ENCODE measurements at regions of chr3 and their contacts with region 1.

Region 1: GRCh38 chr3:33883538-33883950 is 85.1 kb downstream of the PDCD6IP start:
- DNase-seq: peak; percentile 40 to 76 (median 66)
- ATAC-seq: peak; percentile 45
- H3K4me3 ChIP-seq: no peak overlapping the region
- H3K27ac ChIP-seq: no peak overlapping the region
- H3K4me1 ChIP-seq: peaks cover 0 to 22% of the 10 kb centered on the region in 2 experiments; a peak in 2 of 5 replicates
- H3K27me3 ChIP-seq: no peaks in the 10 kb centered on the region
- CTCF ChIP-seq: peak; percentile 61 to 89 (median 71); a peak in 5 of 6 replicates
- EP300 ChIP-seq: no peak
- POLR2A ChIP-seq: no peak
- RAD21 ChIP-seq: peak; percentile 91 to 96

Region 2: DNA sequence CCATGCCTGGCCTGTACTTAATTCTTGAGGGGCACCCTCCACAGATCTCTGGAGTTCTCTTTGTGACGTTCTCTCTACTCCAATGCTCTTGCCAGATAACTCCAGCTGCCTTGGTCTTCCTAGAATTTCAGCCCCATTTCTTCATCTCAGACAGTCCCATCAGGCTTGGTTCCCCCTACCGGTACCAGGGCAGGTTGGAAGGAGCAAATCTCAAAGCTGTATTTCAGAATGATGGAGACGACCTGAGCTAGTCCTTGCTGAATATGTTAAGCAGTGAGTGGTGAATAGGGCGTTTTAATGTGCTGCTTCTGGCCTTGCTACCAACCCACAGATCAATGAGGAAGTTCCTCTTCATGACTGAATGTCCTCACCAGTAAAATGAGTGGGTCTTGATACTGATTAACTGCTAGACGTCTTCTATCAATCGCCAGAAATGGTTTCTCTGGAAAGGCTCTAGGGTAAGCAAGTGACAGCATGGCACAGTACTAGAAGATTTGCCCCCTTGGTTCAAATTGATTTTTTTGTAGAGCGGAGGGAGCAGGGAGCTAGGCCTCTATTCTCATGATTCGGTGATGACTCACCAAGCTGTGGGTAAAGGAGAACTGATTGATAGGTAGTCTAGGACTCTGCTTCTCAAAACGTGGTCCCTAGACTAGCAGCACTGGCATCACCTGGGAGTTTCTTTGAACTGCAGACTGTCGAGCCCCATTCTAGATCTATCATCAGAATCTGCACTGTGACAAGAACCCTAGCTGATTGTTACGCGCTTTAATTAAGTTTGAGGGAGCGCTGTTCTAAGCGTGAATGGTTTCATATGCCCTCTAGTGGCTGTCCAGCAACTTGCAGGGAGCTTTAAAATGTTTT is 511.1 kb before region 1 on chr3:
- CTCF ChIA-PET with region 1: no interaction called
- POLR2A ChIA-PET with region 1: no interaction called
- in situ Hi-C with region 1: no loop called
- intact Hi-C with region 1: no loop called
- DNase-seq: peak; percentile 56 to 71 (median 68)
- ATAC-seq: peak; percentile 81
- H3K4me3 ChIP-seq: no peak overlapping the region
- H3K27ac ChIP-seq: no peak overlapping the region
- H3K4me1 ChIP-seq: no peaks in the 10 kb centered on the region; a peak in 2 of 5 replicates
- H3K27me3 ChIP-seq: no peaks in the 10 kb centered on the region
- CTCF ChIP-seq: peak; percentile 90 to 97 (median 95)
- EP300 ChIP-seq: no peak
- POLR2A ChIP-seq: no peak
- RAD21 ChIP-seq: peak; percentile 91 to 96

Region 3: DNA sequence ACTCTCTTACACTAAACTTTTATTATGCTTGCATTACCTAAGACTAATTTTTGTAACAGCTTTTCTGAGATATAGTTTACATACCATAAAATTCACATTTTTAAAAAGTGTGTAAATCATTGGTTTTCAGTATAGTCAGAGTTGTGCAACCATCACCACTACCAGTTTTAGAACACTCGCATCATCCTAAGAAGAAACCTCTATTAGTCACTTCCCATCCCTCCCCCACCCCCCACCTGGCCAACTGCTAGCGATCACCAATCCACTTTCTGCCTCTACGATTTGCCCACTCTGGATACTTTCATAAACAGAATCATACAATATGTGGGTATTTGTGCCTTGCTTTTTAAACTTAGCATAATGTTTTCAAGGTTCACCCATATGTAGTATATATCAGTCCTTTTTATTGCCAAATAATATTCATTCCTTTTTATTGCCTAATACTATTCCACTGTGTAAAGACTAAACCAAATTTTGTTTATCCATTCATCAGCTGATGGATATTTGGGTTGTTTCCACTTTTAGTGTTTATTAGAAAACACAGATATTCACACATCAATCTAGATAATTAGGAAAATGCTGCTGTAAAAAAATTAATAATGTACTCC is 466.4 kb before region 1 on chr3:
- CTCF ChIA-PET with region 1: no interaction called
- POLR2A ChIA-PET with region 1: no interaction called
- in situ Hi-C with region 1: no loop called
- intact Hi-C with region 1: no loop called
- DNase-seq: peak in 1 of 4 experiments; percentile 16
- ATAC-seq: no peak
- H3K4me3 ChIP-seq: no peak overlapping the region
- H3K27ac ChIP-seq: no peak overlapping the region
- H3K4me1 ChIP-seq: no peaks in the 10 kb centered on the region
- H3K27me3 ChIP-seq: no peaks in the 10 kb centered on the region
- CTCF ChIP-seq: no peak
- EP300 ChIP-seq: no peak
- POLR2A ChIP-seq: no peak
- RAD21 ChIP-seq: no peak

Region 4: GRCh38 chr3:33936921-33937525 is 53.5 kb after region 1 on chr3:
- CTCF ChIA-PET with region 1: no interaction called
- POLR2A ChIA-PET with region 1: interaction called, 4 read pairs
- in situ Hi-C with region 1: no loop called
- intact Hi-C with region 1: loop called (anchors 2 kb)
- DNase-seq: peak in 1 of 4 experiments; percentile 41
- ATAC-seq: peak; percentile 50
- H3K4me3 ChIP-seq: peak overlapping the region; percentile 38
- H3K27ac ChIP-seq: peak overlapping the region; percentile 78
- H3K4me1 ChIP-seq: peaks cover 12 to 55% of the 10 kb centered on the region in 2 experiments
- H3K27me3 ChIP-seq: no peaks in the 10 kb centered on the region
- CTCF ChIP-seq: no peak
- EP300 ChIP-seq: no peak
- POLR2A ChIP-seq: no peak
- RAD21 ChIP-seq: no peak

Region 5: GRCh38 chr3:34012102-34012461 is 128.5 kb after region 1 on chr3:
- CTCF ChIA-PET with region 1: interaction called, 43 read pairs
- POLR2A ChIA-PET with region 1: interaction called, 4 read pairs
- in situ Hi-C with region 1: loop called (anchors 5 kb)
- intact Hi-C with region 1: loop called (anchors 1 kb)
- DNase-seq: peak; percentile 31 to 44 (median 34)
- ATAC-seq: no peak
- H3K4me3 ChIP-seq: no peak overlapping the region
- H3K27ac ChIP-seq: no peak overlapping the region
- H3K4me1 ChIP-seq: peaks cover 3 to 9% of the 10 kb centered on the region in 2 experiments
- H3K27me3 ChIP-seq: no peaks in the 10 kb centered on the region
- CTCF ChIP-seq: no peak
- EP300 ChIP-seq: no peak
- POLR2A ChIP-seq: no peak
- RAD21 ChIP-seq: no peak

Region 6: GRCh38 chr3:34155666-34156065 is 272.1 kb after region 1 on chr3:
- CTCF ChIA-PET with region 1: no interaction called
- POLR2A ChIA-PET with region 1: no interaction called
- in situ Hi-C with region 1: no loop called
- intact Hi-C with region 1: no loop called
- DNase-seq: no peak
- ATAC-seq: no peak; the same call in 2 of the 3 replicates
- H3K4me3 ChIP-seq: no peak overlapping the region
- H3K27ac ChIP-seq: no peak overlapping the region
- H3K4me1 ChIP-seq: no peaks in the 10 kb centered on the region
- H3K27me3 ChIP-seq: no peaks in the 10 kb centered on the region
- CTCF ChIP-seq: no peak
- EP300 ChIP-seq: no peak
- POLR2A ChIP-seq: no peak
- RAD21 ChIP-seq: no peak

Region 7: DNA sequence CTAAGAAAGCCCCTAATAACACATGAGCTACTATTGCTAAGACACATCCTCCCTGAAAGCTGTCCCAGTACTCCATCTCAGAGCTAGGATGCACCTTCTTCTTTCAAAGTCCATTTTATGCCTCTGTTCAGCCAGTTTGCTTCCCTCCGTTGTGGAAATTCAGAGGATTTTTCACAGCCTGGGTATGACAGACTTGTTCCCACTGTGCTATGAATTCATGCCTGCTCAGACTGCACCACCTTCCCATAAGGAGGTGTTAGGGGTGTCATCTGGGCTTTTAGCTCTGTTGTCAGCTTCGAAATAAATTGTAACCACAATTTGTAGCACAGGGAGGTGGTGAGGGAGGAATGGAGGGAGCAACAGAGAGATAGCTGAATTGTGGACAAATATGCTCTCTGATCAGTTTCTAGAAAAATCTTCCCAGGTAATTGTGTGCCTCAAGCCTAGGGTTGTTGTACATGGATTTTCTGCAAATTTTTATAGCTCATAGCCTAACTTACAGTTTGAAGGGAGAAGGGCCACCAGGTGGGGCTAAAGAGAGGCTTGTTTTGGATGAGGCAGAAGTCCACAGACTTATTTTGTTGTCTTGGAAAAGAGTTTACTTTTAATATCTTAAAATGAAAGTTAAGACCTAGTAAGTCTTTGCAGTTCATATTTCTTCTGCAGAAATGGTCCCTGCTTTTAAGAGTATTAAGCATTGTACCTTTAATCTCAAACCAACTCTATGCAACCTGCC is 376.9 kb after region 1 on chr3:
- CTCF ChIA-PET with region 1: interaction called, 6 read pairs
- POLR2A ChIA-PET with region 1: no interaction called
- in situ Hi-C with region 1: loop called (anchors 25 kb)
- intact Hi-C with region 1: loop called (anchors 5 kb)
- DNase-seq: peak; percentile 45 to 60 (median 54)
- ATAC-seq: peak; percentile 89
- H3K4me3 ChIP-seq: no peak overlapping the region
- H3K27ac ChIP-seq: no peak overlapping the region
- H3K4me1 ChIP-seq: no peaks in the 10 kb centered on the region
- H3K27me3 ChIP-seq: no peaks in the 10 kb centered on the region
- CTCF ChIP-seq: peak; percentile 39 to 69 (median 62)
- EP300 ChIP-seq: no peak
- POLR2A ChIP-seq: no peak
- RAD21 ChIP-seq: peak; percentile 61 to 68

Region 8: GRCh38 chr3:34683851-34684250 is 800.3 kb after region 1 on chr3:
- CTCF ChIA-PET with region 1: interaction called, 11 read pairs
- POLR2A ChIA-PET with region 1: no interaction called
- in situ Hi-C with region 1: loop called (anchors 5 kb)
- intact Hi-C with region 1: loop called (anchors 1 kb)
- DNase-seq: peak in 3 of 4 experiments; percentile 11 to 75 (median 15)
- ATAC-seq: peak; percentile 79
- H3K4me3 ChIP-seq: no peak overlapping the region
- H3K27ac ChIP-seq: no peak overlapping the region
- H3K4me1 ChIP-seq: no peaks in the 10 kb centered on the region; a peak in 1 of 5 replicates
- H3K27me3 ChIP-seq: no peaks in the 10 kb centered on the region
- CTCF ChIP-seq: peak; percentile 49 to 80 (median 61)
- EP300 ChIP-seq: no peak
- POLR2A ChIP-seq: no peak
- RAD21 ChIP-seq: peak; percentile 94 to 95

Measured in K562 (cell line).